ENCODE measurements at regions of chr19 and their contacts with region 1.

Region 1: DNA sequence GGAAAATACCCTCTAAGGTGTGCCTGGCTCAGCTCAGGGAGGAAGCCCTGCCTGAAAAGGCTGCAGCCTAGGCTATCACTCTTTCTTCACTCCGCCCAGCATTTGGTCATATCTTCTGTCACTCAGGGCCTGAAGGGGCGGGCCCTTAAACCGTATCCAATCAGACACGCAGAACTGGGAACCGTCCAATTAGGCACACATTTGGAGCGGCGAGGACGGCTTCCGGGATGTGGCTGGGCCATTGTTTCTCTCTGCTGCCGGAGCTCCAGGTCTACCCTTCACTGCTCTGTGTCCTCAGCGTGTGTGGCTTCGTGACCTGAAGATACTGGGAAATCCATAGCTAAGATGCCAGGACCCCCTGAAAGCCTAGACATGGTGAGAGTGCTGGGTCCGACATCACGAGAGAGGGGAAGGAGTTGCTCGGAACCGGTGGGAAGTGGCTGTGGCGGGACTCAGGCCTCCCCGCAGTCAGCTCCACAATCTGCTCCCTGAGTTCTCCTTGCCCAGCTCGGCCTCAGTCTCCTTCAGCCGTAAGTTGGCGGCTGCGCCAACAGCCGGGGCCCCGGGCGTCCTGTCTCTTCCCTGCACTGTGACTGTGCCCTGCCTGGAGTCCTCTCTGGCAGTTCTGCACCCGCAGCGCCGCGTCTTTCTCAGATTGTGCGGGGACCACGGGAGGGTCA is at the start of gene ZNF493:
- DNase-seq: peak; percentile 93 to 95
- ATAC-seq: peak; percentile 100
- H3K4me3 ChIP-seq: peak within 1 kb of the TSS; percentile 95
- H3K27ac ChIP-seq: peak within 1 kb of the TSS; percentile 86
- H3K4me1 ChIP-seq: peaks cover 14% of the 10 kb centered on the region
- H3K27me3 ChIP-seq: no peaks in the 10 kb centered on the region
- CTCF ChIP-seq: no peak
- total RNA-seq, gene ZNF493: 4.1 to 11.2 (median 5.5) TPM

Region 2: GRCh38 chr19:21141787-21142464 is 255.1 kb before region 1 on chr19 and contains the start of gene ZNF431:
- intact Hi-C with region 1: loop called in 1 of 2 experiments (anchors 10 kb)
- DNase-seq: peak; percentile 91 to 95
- ATAC-seq: peak; percentile 99 to 100 (median 100)
- H3K4me3 ChIP-seq: peak within 1 kb of the TSS; percentile 87
- H3K27ac ChIP-seq: peak within 1 kb of the TSS; percentile 76
- H3K4me1 ChIP-seq: peaks cover 9% of the 10 kb centered on the region
- H3K27me3 ChIP-seq: no peaks in the 10 kb centered on the region
- CTCF ChIP-seq: no peak
- total RNA-seq, gene ZNF431: 5.7 to 17.4 (median 9.1) TPM

Region 3: DNA sequence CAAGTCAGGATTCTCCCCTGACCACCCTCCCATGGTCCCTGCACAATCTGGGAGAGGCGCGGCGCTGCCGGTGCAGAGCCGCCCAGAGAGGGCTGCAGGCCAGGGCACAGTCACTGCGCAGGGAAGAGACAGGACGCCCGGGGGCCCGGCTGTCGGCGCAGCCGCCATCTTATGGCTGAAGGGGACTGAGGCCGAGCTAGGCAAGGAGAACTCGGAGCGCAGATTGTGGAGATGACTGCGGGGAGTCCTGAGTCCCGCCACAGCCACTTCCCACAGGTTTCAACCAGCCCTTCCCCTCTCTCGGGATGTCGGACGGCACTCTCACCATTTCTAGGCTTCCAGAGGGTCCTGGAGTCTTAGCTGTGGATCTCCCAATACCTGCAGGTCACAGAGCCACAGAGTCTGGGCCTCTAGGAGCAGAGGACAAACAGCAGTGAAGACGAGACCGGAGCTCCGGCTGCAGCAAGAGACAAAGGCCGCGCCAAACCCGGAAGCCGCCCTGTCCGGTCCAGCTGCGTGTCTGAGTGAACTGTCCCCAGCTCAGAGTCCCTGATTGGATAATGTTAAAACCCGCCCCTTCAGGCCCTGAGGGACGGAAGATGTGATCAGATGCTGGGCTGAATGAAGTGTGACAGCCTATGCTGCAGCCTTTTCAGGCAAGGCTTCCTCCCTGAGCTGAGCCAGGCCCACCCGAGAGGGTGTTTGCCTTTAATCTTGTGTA is 68.0 kb before region 1 on chr19 and contains the start of gene ZNF708:
- intact Hi-C with region 1: loop called in 1 of 2 experiments (anchors 10 kb)
- DNase-seq: peak; percentile 87 to 90
- ATAC-seq: peak; percentile 99 to 100 (median 100)
- H3K4me3 ChIP-seq: peak within 1 kb of the TSS; percentile 89
- H3K27ac ChIP-seq: peak within 1 kb of the TSS; percentile 93
- H3K4me1 ChIP-seq: peaks cover 16% of the 10 kb centered on the region
- H3K27me3 ChIP-seq: no peaks in the 10 kb centered on the region
- CTCF ChIP-seq: no peak
- total RNA-seq, gene ZNF708: 3.2 to 4.9 (median 4.3) TPM

Region 4: GRCh38 chr19:21434967-21435544 is 38.0 kb after region 1 on chr19:
- intact Hi-C with region 1: no loop called
- DNase-seq: no peak
- ATAC-seq: no peak
- H3K4me3 ChIP-seq: no peak overlapping the region
- H3K27ac ChIP-seq: no peak overlapping the region
- H3K4me1 ChIP-seq: no peaks in the 10 kb centered on the region
- H3K27me3 ChIP-seq: no peaks in the 10 kb centered on the region
- CTCF ChIP-seq: no peak

Region 5: DNA sequence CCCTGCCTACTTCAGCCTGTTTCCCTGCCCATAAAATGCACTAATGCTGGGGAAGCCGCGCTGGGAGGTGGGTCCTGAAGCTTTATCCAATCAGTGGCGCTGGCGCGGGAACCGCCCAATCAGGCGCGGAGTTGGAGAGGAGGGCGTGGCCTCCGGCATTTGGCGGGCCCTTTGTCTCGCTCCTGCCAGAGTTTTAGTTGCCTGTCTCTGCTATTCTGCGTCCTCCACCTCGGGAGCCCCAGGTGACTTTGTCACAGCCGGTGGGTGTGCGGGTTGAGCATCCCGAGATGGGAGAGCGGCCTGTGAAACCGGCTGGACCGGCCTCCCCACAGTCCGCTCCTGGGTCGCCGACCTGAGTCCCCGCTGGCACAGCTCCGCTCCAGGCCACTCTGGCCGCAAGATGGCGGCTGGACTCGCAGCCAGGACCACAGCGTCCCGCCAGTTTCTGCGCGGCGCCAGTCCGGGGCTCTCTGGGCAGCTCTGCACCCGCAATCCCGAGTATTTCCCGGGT is 77.7 kb after region 1 on chr19:
- intact Hi-C with region 1: no loop called
- DNase-seq: peak; percentile 66 to 85
- ATAC-seq: peak; percentile 73 to 100 (median 96)
- H3K4me3 ChIP-seq: peak overlapping the region; percentile 67
- H3K27ac ChIP-seq: no peak overlapping the region
- H3K4me1 ChIP-seq: no peaks in the 10 kb centered on the region
- H3K27me3 ChIP-seq: peaks cover 0 to 7% (median 0%) of the 10 kb centered on the region in 3 donors
- CTCF ChIP-seq: no peak